Activated CD4-positive, alpha-beta T cell treated with anti-CD3 and anti-CD28 coated beads, Interleukin-2, amount 10 ng/mL, durations not matched to agents 24 days and 14 days (primary cell): ENCODE measurements at regions of chr12 and their contacts with region 1.

Region 1: GRCh38 chr12:124453419-124454351 is 113.7 kb downstream of the NCOR2 start:
- DNase-seq: peak; percentile 92
- H3K4me3 Mint-ChIP-seq: peak overlapping the region; percentile 67
- H3K27ac Mint-ChIP-seq: peak overlapping the region; percentile 75
- H3K4me1 Mint-ChIP-seq: peaks cover 37% of the 10 kb centered on the region
- H3K27me3 Mint-ChIP-seq: no peaks in the 10 kb centered on the region

Region 2: DNA sequence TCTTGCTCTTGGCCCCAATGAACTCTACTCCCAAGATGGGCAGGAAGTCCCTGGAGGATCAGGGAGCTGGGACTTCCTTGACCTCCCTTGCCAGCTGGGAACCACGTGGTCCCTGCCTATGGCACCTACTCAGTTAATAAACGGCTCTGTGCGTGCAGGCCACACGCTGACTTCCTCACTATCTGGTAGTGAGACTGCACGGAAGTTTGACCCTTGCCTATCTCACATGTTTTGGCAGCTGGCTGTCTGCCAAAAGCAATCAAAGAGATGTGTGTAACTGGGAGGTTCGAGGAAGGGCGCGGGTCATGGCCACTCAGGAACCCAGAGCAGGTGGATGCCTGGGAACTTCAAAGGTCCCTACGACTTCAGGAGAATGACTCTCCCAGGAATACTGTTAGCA is 100.8 kb before region 1 on chr12:
- intact Hi-C with region 1: no loop called
- DNase-seq: no peak
- H3K4me3 Mint-ChIP-seq: no peak overlapping the region
- H3K27ac Mint-ChIP-seq: no peak overlapping the region
- H3K4me1 Mint-ChIP-seq: no peaks in the 10 kb centered on the region
- H3K27me3 Mint-ChIP-seq: no peaks in the 10 kb centered on the region

Region 3: DNA sequence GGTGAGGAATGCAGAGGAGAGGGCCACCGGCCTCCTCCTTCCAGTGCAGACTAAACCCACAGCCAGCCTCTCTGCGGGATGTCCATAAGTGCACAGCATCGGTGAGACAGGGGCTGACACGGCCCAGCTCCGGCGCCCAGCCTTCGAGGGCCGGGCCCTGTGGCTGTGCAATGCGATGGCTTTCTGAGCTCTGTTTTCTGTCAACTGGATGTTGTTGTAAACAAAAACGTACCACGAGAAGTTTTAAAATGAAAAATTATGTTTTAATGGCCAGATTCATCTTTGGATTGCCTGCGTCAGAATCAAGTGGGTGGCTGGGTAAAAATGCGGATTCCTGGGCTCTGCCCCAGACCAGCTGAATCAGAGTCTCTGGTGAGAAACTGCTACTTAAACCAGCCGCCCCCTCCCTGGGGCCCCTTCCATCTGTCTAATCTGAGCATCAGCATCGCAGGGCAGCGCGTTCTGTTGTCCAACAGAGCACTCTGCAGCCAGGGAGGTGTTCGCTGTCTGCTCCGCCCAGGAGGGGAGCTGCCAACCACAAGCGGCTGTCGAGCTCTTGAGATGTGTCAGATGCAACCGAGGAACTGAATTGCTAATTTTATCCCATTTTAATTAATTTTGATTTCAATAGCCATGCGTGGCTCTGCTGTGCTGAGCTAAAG is 25.4 kb before region 1 on chr12:
- intact Hi-C with region 1: no loop called
- DNase-seq: no peak
- H3K4me3 Mint-ChIP-seq: no peak overlapping the region
- H3K27ac Mint-ChIP-seq: no peak overlapping the region
- H3K4me1 Mint-ChIP-seq: no peaks in the 10 kb centered on the region
- H3K27me3 Mint-ChIP-seq: no peaks in the 10 kb centered on the region

Region 4: DNA sequence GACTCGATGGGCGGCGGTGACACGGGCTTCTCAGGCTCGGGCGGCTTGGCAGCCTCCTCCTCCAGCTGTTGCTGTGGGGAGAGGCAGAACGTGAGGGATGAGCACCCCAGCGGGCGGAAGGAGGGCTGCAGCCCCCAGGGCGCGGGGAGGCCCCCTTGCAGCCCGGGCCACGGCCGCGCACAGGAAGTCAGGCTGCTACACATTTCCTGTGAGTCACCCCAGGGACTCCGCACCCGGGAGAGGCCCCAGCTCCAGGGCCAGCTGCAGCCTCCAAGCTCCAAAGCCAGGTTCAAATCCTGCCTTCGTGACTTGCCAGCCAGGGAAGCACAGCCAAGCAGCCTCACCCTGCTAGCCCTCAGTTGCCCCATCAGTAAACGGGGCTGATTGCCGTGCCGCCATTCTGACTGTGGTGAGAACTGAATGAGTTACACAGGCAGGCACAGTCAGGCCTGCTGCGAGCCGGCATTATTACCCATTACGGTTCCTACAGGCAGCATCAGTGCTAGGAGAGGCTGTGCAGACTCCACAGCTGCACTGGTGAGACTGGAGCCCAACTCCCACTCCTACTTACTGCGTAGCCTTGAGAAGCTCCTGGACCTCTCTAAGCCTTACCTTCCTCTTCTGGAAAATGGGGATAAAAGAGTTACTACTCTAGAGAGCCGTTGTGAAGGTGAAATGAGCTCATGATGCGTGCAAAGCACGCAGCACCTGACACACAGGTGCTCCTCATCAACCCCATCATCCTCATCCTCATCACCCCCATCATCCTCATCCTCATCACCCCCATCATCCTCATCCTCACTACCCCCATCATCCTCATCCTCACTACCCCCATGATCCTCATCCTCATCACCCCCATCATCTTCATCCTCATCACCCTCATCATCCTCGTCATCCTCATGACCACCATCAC is 12.8 kb after region 1 on chr12:
- intact Hi-C with region 1: loop called (anchors 1 kb)
- DNase-seq: peak; percentile 95
- H3K4me3 Mint-ChIP-seq: peak overlapping the region; percentile 69
- H3K27ac Mint-ChIP-seq: peak overlapping the region; percentile 80
- H3K4me1 Mint-ChIP-seq: peaks cover 26% of the 10 kb centered on the region
- H3K27me3 Mint-ChIP-seq: no peaks in the 10 kb centered on the region

Region 5: DNA sequence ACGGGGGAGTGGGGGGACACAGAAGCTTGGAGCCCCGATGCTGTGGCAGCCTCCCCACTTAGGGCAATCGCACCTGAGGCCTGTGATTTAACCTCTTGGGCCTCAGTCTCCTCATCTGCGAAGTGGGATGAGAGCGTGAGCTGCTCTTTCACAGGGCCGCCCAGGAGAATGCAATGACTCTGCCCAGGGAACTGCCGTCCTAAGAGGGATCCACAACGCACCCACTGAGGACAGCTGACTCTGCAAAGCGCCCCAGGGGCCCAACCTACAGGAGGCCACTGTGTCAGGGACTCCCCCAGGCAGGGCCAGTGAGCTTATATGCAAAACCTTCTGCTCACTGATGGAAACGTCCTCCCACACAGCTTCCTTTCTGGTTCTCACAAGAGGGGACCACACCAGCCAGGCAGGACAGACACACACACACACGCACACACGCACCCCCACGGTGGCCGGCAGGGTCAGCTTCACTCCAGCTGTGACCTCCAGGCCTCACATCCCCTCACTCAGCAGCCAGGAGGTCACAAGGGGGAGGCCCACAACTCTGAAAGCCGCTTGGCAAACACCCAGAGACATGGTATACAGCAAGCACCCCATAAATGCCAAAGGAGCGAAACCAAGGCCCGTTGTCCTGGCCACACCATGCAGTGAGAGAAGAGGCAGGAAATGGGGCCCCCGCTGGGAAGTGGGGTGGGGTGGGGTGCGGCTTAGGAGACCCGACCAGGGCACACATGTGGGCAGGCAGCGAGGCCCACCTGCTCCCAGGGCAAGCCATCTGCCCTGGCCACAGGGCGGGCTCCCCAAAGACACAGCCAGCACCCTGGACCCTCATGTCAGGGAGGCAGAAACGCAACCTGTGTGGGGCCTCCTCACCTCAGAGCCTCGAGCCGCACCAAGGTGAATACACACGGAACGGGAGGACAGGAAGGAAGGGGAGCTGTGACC is 40.4 kb after region 1 on chr12:
- intact Hi-C with region 1: loop called (anchors 2 kb)
- DNase-seq: peak; percentile 68
- H3K4me3 Mint-ChIP-seq: peak overlapping the region; percentile 57
- H3K27ac Mint-ChIP-seq: peak overlapping the region; percentile 83
- H3K4me1 Mint-ChIP-seq: peaks cover 22% of the 10 kb centered on the region
- H3K27me3 Mint-ChIP-seq: no peaks in the 10 kb centered on the region

Region 6: GRCh38 chr12:124545508-124546418 is 92.1 kb after region 1 on chr12:
- intact Hi-C with region 1: loop called (anchors 1 kb)
- DNase-seq: peak; percentile 85
- H3K4me3 Mint-ChIP-seq: peak overlapping the region; percentile 25
- H3K27ac Mint-ChIP-seq: peak overlapping the region; percentile 57
- H3K4me1 Mint-ChIP-seq: peaks cover 38% of the 10 kb centered on the region
- H3K27me3 Mint-ChIP-seq: no peaks in the 10 kb centered on the region

Region 7: GRCh38 chr12:124713436-124714082 is 259.9 kb after region 1 on chr12:
- intact Hi-C with region 1: loop called (anchors 10 kb)
- DNase-seq: peak; percentile 90
- H3K4me3 Mint-ChIP-seq: peak overlapping the region; percentile 58
- H3K27ac Mint-ChIP-seq: peak overlapping the region; percentile 78
- H3K4me1 Mint-ChIP-seq: peaks cover 18% of the 10 kb centered on the region
- H3K27me3 Mint-ChIP-seq: peaks cover 20% of the 10 kb centered on the region